ENCODE measurements at regions of chr12 and their contacts with region 1.

Region 1: DNA sequence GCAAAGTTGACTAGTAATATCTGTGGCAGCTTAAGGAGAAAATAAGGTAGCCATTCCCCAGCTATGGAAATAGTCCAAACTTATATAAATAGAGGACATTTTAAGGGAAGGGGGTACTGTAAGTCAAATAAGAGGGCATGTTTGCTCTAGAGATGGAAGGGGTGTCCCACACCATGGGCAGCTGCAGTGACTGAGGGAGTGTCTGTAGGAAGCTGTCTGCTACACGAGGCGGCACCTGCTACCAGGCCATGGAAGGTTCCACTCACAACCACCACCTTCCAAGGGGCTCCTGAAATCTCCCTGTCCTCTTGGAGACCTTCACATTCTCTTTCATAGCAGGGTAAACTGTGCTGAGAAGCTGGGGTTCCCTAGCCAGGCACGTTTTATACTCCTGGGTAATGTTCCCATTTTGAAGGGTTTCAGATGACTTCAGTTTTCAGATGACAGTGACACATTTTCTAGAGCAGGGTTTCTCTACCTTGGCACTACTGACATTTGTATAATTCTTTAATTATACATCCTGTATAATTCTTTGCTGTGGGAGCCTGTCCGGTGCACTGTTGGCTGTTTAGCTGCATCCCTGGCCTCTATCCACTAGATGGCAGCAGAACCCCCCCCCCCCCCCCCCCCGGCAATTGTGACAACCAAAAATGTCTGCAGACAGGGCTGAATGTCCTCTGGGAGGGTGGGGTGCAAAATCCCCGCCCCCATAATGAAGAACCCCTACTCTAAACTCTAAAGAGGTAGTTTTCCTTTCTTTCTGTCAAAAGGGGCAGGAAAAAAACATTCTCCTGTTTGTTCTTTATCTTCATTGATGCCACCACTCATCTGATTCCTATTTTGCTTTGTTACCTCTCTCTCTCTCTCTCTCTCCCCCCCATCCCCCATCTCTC is 11.6 kb upstream of the SMCO2 start:
- DNase-seq: no peak
- ATAC-seq: no peak
- H3K4me3 Mint-ChIP-seq: no peak overlapping the region
- H3K27ac Mint-ChIP-seq: no peak overlapping the region
- H3K4me1 Mint-ChIP-seq: peaks cover 22% of the 10 kb centered on the region
- H3K27me3 Mint-ChIP-seq: peaks cover 9% of the 10 kb centered on the region
- CTCF ChIP-seq: peak; percentile 34; the same call in 1 of the 2 replicates

Region 2: DNA sequence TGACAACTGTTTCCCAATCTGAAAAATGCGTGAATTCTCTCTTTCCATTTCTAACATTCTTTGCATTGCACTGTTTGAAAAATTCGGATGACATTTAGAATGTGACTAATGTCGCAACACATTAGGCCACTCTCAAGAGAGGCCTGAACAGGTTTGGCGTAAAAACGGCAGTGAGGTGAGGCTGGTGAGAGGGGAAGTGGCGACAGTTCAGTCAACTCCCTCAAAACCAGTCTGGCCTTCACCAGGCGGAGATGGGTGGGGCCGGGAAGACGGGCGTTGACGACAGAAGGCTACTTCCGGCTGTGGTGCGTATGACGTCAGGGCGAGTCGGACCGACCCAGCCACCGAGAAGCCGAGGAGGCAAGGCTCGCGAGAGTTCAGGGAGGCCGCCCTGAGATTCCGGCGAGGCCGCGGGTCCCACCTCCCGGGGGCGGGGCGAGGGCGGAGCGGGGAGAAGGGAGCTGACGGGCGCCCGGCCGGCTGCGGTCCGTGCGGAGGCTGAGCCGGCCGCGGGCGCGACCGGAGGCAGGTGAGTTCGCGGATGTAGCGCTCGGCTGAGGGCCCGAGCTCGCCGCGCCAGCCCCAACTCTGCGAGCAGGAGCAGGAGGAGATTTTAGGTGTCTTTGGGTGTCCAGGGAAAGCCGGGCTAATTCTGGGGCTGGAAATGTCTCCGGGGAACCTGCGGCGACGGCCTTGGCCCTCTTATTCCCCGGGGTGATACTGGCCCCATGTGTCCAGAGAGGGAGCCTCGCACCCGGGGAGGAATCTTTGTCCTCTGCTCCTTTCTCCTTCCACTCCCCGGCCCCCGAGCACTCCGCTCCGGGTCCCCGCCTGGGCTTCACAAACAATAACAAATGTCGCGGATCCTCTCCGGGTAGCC is 190.9 kb before region 1 on chr12 and contains the start of gene STK38L:
- CTCF ChIA-PET with region 1: no interaction called
- POLR2A ChIA-PET with region 1: no interaction called
- DNase-seq: peak; percentile 98
- ATAC-seq: peak; percentile 99
- H3K4me3 Mint-ChIP-seq: peak within 1 kb of the TSS; percentile 97
- H3K27ac Mint-ChIP-seq: peak within 1 kb of the TSS; percentile 93
- H3K4me1 Mint-ChIP-seq: peaks cover 21% of the 10 kb centered on the region
- H3K27me3 Mint-ChIP-seq: no peaks in the 10 kb centered on the region; the same call in 1 of the 2 replicates
- CTCF ChIP-seq: no peak
- total RNA-seq, gene STK38L: 37.6 to 47.2 TPM (median 41.7 TPM) in 3 replicates

Region 3: DNA sequence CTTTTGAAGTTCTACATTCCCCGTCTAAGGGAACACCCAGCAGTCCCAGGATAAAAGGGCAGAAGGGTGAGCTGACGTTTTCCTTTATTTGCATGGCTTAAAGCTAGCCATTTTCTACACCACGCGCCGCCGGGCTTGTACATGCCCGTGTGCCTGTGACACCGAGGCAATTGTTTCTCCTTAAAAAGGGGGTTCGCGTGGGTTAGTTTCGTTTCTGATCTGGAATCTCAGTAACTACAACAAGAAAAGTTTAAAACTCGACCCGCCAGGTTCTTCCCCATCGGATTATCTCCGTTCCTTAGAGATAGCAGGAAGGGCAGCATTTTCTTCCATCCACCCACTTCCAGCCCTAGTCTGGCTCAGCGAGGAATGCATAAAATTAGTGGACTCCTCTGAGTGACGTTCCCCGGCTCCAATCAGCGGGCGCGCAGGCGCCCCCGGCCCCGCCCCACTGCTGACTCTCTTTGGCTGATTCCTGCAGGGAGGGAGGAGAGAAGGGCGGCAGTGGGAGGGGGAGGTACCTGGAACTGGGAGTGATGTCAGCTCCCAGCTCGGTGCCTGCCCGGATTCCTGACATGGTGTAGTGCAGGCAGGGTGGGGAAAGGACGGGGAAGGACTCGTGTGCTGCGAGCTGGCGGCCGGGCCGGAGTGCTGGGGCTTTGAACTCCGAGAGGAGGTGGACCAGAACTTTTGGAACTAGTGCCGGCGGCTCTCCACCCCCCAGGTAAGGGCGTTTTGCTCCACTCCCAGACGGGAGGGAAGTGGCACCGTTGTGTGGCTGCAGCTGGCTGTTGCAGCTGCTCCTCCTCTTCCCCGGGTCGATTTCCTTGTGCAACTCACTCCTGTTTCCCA is 88.9 kb after region 1 on chr12 and contains the start of gene PPFIBP1:
- CTCF ChIA-PET with region 1: interaction called, 13 read pairs
- POLR2A ChIA-PET with region 1: interaction called, 6 read pairs
- DNase-seq: peak; percentile 100
- ATAC-seq: peak; percentile 89
- H3K4me3 Mint-ChIP-seq: peak within 1 kb of the TSS; percentile 79
- H3K27ac Mint-ChIP-seq: peak within 1 kb of the TSS; percentile 95
- H3K4me1 Mint-ChIP-seq: peaks cover 43% of the 10 kb centered on the region
- H3K27me3 Mint-ChIP-seq: peaks cover 57% of the 10 kb centered on the region
- CTCF ChIP-seq: no peak
- total RNA-seq, gene PPFIBP1: 22.3 to 28.7 TPM (median 27.7 TPM) in 3 replicates

Measured in WTC11 (cell line).